H1 (cell line): ENCODE measurements at regions of chr9 and their contacts with region 1.

Region 1: DNA sequence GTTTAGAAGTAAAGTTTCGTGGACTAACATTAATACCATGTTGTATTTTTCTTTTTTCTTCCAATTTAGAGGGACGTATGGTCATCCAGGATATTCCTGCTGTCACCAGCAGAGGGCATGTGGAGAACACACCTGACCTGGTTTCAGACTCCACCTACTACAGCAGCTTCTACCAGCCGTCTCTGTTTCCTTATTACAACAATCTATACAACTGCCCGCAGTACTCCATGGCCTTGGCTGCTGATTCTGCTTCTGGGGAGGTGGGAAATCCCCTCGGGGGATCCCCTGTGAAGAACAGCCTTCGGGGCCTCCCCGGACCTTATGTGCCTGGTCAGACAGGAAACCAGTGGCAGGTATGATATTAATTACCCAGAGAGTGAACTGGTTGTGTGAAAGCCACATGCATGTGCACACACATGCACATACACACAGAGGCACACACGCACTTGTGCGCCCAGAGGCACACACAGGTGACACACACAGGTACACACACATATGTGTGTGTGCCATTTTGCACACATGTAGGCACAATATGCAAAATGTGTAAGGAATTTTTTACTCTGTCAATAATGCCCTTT is 52.4 kb downstream of the DMRT1 start:
- DNase-seq: peak; percentile 10 to 66
- H3K4me3 ChIP-seq: no peak overlapping the region
- H3K27ac ChIP-seq: no peak overlapping the region
- H3K4me1 ChIP-seq: peaks cover 0 to 12% (median 0%) of the 10 kb centered on the region in 4 experiments; a peak in 1 of 7 replicates
- H3K27me3 ChIP-seq: peaks cover 0 to 9% (median 0%) of the 10 kb centered on the region in 4 experiments; a peak in 2 of 7 replicates
- CTCF ChIP-seq: peak; percentile 67 to 96 (median 86)
- EP300 ChIP-seq: no peak
- POLR2A ChIP-seq: no peak
- RAD21 ChIP-seq: peak; percentile 94 to 96

Region 2: DNA sequence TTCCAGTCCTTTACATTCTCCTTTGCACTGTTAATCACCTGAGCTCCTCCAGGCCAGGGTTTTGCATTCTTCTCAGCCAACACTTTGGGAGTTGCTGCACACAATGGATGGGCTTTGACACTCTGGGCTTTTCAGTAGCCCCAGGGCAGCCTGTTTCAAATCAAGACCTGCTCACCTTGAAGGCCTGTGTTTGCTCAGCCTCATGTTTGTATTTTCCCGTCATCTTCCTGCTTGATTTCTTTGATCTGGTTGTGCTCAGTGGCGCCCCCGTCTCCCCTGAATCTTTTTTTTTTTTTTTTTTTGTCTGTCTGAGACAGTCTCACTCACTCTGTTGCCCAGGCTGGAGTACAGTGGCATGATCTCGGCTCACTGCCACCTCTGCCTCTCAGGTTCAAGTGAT is 11.5 kb before region 1 on chr9:
- CTCF ChIA-PET with region 1: interaction called, 51 read pairs
- POLR2A ChIA-PET with region 1: no interaction called
- DNase-seq: no peak
- H3K4me3 ChIP-seq: no peak overlapping the region
- H3K27ac ChIP-seq: no peak overlapping the region
- H3K4me1 ChIP-seq: no peaks in the 10 kb centered on the region
- H3K27me3 ChIP-seq: no peaks in the 10 kb centered on the region
- CTCF ChIP-seq: peak in 2 of 3 experiments; percentile 16 to 46; a peak in 2 of 4 replicates
- EP300 ChIP-seq: no peak
- POLR2A ChIP-seq: no peak
- RAD21 ChIP-seq: no peak

Region 3: GRCh38 chr9:911003-911402 is 17.1 kb after region 1 on chr9:
- CTCF ChIA-PET with region 1: interaction called, 20 read pairs
- POLR2A ChIA-PET with region 1: interaction called, 3 read pairs
- DNase-seq: peak in 1 of 2 experiments; percentile 19
- H3K4me3 ChIP-seq: no peak overlapping the region
- H3K27ac ChIP-seq: no peak overlapping the region
- H3K4me1 ChIP-seq: peaks cover 0 to 11% (median 2%) of the 10 kb centered on the region in 4 experiments; a peak in 3 of 7 replicates
- H3K27me3 ChIP-seq: no peaks in the 10 kb centered on the region; a peak in 1 of 7 replicates
- CTCF ChIP-seq: peak; percentile 59 to 70 (median 68)
- EP300 ChIP-seq: no peak
- POLR2A ChIP-seq: no peak
- RAD21 ChIP-seq: peak; percentile 49 to 68

Region 4: DNA sequence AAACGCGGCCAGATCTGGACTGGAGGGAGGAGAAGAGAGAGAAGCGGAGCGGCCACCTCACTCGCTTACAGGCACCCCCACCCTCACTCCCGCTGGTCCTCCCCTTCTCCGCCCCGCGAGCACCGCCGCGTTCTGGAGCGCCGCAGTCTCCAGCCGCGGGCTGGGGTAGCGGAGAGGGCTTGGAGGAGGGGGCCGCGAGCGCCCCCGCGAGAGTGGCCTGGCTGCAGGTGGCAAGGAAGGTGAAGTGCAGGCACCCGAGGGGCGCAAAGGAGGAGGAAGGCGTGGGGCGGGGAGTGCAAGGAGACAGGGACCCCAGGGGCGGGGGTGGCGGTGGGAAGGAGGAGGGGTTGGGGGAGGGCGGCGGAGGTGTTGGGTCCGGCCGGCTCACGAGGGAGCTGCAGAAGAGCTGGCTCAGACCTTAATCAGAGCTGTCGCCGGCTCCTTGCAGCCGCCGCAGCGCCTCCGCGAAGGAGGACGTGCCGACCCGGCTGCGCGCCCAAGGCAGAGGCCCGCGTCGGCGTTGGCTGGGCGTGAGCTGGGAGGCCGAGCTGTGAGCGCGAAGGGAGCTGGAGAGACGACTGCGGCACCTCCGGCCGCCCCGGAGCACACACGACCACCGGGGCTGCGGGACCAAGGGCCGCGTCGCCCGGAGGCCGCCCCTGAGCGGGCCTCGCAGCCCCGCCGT is 82.5 kb after region 1 on chr9 and contains the start of gene DMRT3:
- CTCF ChIA-PET with region 1: interaction called, 108 read pairs
- POLR2A ChIA-PET with region 1: no interaction called
- DNase-seq: peak in 1 of 2 experiments; percentile 83
- H3K4me3 ChIP-seq: peak within 1 kb of the TSS; percentile 33 to 63 (median 40)
- H3K27ac ChIP-seq: no peak within 1 kb of the TSS
- H3K4me1 ChIP-seq: peaks cover 13 to 36% (median 23%) of the 10 kb centered on the region in 4 experiments
- H3K27me3 ChIP-seq: peaks cover 77 to 96% (median 92%) of the 10 kb centered on the region in 4 experiments
- CTCF ChIP-seq: peak in 1 of 3 experiments; percentile 22; a peak in 1 of 4 replicates
- EP300 ChIP-seq: no peak
- POLR2A ChIP-seq: no peak
- RAD21 ChIP-seq: no peak; a peak in 1 of 4 replicates
- total RNA-seq, gene DMRT3: not detected in 2 replicates

Region 5: GRCh38 chr9:994005-994404 is 100.1 kb after region 1 on chr9:
- CTCF ChIA-PET with region 1: interaction called, 23 read pairs
- POLR2A ChIA-PET with region 1: no interaction called
- DNase-seq: no peak
- H3K4me3 ChIP-seq: no peak overlapping the region
- H3K27ac ChIP-seq: no peak overlapping the region
- H3K4me1 ChIP-seq: no peaks in the 10 kb centered on the region
- H3K27me3 ChIP-seq: no peaks in the 10 kb centered on the region
- CTCF ChIP-seq: no peak
- EP300 ChIP-seq: no peak
- POLR2A ChIP-seq: no peak
- RAD21 ChIP-seq: no peak